CD8-positive, alpha-beta T cell (primary cell): ENCODE measurements at regions of chr17 and their contacts with region 1.

Region 1: DNA sequence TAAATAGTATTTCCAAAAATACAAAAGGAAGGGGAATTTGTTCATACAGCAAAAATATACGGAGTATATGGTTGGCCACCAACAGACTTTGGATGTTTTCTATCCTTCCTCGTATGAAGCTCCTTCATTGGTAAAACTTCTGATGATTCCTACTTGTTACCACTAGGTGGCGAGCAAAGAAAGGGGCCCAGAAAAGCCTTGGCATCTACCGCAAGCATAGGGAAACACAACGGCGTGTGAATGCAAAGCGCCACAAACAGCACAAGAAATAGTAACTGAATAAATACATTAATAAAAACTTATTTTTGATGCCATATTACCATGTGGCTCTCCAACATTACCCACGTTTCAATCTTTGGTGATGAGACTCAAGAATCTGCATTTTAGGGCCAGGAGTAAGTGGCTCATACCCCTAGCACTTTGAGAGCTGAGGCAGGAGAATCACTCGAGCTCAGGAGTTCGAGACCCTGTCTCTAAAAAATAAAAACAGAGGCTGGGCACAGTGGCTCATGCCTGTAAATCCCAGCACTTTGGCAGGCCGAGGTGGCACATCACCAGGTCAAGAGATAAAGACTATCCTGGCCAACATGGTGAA is 34.5 kb downstream of the YWHAE start:
- DNase-seq: peak; percentile 10 to 88 (median 58)
- ATAC-seq: peak; percentile 76
- H3K4me3 ChIP-seq: no peak overlapping the region
- H3K4me3 Mint-ChIP-seq: no peak overlapping the region
- H3K27ac ChIP-seq: peak overlapping the region in 1 of 2 experiments; percentile 61
- H3K27ac Mint-ChIP-seq: no peak overlapping the region
- H3K4me1 ChIP-seq: peaks cover 34% of the 10 kb centered on the region
- H3K4me1 Mint-ChIP-seq: peaks cover 62% of the 10 kb centered on the region
- H3K27me3 ChIP-seq: no peaks in the 10 kb centered on the region
- H3K27me3 Mint-ChIP-seq: no peaks in the 10 kb centered on the region
- CTCF ChIP-seq: peak; percentile 90

Region 2: DNA sequence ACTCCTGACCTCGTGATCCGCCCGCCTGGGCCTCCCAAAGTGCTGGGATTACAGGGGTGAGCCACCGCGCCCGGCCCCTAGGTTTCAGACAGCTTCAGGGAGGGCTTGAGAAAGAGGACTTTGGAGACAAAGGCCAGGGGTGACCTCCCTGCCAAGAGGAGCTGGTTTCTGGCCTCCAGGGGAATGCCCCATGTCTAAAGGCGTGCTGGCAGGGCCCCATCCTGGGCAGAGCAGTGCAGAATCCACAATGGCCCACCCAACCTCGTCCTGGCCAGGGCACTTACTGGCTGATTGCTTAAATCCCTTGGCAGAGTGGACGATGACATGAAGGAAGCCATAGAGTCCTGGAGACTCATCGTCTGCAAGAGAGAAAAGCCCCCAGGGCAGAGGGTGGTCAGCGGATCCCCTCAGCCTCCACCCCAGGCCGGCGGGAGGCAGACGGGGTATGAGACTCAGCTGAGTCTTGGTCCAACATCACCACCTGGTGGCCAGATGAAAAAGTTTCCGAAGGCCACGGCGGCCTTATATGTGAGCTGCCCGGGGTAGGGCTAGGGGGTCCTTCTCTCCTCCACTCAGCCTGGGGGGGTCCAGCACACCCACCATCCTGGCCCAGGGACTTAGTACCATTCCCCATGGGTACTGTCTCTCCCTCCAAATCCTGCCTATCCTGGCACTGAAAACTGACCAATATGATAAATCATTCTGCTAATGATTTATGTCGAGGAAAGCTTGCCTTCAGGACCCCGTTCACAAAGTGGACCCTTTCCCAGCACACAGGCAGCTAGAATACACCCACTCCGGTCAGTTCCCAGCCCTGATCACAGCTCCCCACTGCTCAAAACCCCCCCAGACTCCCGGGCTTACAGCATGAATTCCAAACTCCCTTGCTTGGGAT is 309.5 kb before region 1 on chr17:
- CTCF ChIA-PET with region 1: no interaction called
- POLR2A ChIA-PET with region 1: no interaction called
- intact Hi-C with region 1: no loop called
- DNase-seq: peak in 8 of 9 experiments; percentile 8 to 64 (median 45)
- ATAC-seq: peak; percentile 42
- H3K4me3 ChIP-seq: no peak overlapping the region
- H3K4me3 Mint-ChIP-seq: no peak overlapping the region
- H3K27ac ChIP-seq: no peak overlapping the region
- H3K27ac Mint-ChIP-seq: no peak overlapping the region
- H3K4me1 ChIP-seq: no peaks in the 10 kb centered on the region
- H3K4me1 Mint-ChIP-seq: no peaks in the 10 kb centered on the region
- H3K27me3 ChIP-seq: no peaks in the 10 kb centered on the region
- H3K27me3 Mint-ChIP-seq: no peaks in the 10 kb centered on the region
- CTCF ChIP-seq: peak; percentile 47

Region 3: GRCh38 chr17:1260086-1260769 is 105.3 kb before region 1 on chr17:
- CTCF ChIA-PET with region 1: interaction called, 10 read pairs
- POLR2A ChIA-PET with region 1: no interaction called
- intact Hi-C with region 1: no loop called
- DNase-seq: no peak
- ATAC-seq: no peak
- H3K4me3 ChIP-seq: peak overlapping the region in 1 of 2 experiments; percentile 49
- H3K4me3 Mint-ChIP-seq: peak overlapping the region; percentile 49
- H3K27ac ChIP-seq: no peak overlapping the region
- H3K27ac Mint-ChIP-seq: no peak overlapping the region
- H3K4me1 ChIP-seq: peaks cover 24% of the 10 kb centered on the region
- H3K4me1 Mint-ChIP-seq: peaks cover 31% of the 10 kb centered on the region
- H3K27me3 ChIP-seq: peaks cover 0 to 6% of the 10 kb centered on the region in 2 experiments
- H3K27me3 Mint-ChIP-seq: peaks cover 18% of the 10 kb centered on the region
- CTCF ChIP-seq: no peak

Region 4: DNA sequence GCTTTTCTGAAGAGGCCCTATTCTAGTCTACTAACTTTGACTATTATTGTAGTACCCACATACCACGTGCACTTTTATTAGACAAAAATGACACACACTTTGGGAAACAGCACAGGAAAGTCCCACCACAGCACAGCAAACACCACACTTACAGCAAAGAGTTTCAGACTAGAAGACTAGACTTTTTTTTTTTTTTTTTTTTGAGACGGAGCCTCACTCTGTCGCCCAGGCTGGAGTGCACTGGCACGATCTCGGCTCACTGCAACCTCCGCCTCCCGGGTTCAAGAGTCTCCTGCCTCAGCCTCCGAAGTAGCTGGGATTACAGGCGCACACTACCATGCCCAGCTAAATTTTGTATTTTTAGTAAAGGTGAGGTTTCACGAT is 14.4 kb after region 1 on chr17:
- CTCF ChIA-PET with region 1: interaction called, 25 read pairs
- POLR2A ChIA-PET with region 1: interaction called, 7 read pairs
- intact Hi-C with region 1: no loop called
- DNase-seq: peak in 3 of 9 experiments; percentile 45 to 72 (median 58)
- ATAC-seq: peak; percentile 56
- H3K4me3 ChIP-seq: no peak overlapping the region
- H3K4me3 Mint-ChIP-seq: peak overlapping the region; percentile 35
- H3K27ac ChIP-seq: no peak overlapping the region
- H3K27ac Mint-ChIP-seq: peak overlapping the region; percentile 64
- H3K4me1 ChIP-seq: peaks cover 66% of the 10 kb centered on the region
- H3K4me1 Mint-ChIP-seq: peaks cover 69% of the 10 kb centered on the region
- H3K27me3 ChIP-seq: no peaks in the 10 kb centered on the region
- H3K27me3 Mint-ChIP-seq: no peaks in the 10 kb centered on the region
- CTCF ChIP-seq: no peak

Region 5: DNA sequence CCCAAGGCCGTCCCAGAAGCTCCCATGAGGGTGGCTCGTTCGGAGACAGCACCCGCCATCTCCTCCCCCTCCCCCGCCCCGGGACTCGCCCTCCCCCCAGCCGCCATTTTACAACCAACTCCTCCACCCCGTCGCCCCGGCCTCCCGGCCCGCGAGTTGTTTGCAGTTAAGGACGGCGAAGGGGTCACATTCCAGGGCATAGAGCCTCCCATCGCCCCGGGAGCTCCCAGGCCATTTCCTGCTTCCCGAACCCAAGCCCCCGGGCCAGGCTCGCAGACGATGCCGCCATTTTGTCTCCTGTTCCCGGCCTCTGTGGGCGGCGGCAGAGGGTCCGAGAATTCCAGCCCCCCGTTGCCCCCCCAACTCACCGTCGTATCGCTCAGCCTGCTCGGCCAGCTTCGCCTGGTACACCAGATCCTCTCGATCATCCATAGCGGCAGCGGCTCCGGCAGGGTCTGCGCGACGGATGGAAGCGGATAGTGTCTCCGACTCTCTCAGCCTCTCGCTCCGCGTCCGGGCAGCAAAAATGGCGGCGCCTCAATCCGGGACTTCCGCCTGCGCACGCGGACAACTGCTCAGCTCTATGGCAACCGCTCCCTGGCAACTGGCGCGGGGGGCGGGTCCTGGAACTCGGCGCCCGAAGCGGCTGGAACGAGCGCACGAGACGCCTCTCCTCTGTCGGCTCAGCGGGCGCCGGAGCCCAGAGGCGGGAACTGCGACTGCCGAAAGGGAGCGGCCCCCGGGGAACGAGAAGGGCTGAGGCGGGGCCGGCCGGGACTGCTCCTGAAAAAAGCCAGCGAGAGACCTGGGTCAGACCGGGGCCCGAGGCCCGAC is 34.4 kb after region 1 on chr17 and contains the start of gene YWHAE:
- CTCF ChIA-PET with region 1: interaction called, 20 read pairs
- POLR2A ChIA-PET with region 1: interaction called, 14 read pairs
- intact Hi-C with region 1: loop called (anchors 1 kb)
- DNase-seq: peak; percentile 87 to 97 (median 96)
- ATAC-seq: peak; percentile 86
- H3K4me3 ChIP-seq: peak within 1 kb of the TSS; percentile 100
- H3K4me3 Mint-ChIP-seq: peak within 1 kb of the TSS; percentile 99
- H3K27ac ChIP-seq: peak within 1 kb of the TSS; percentile 94 to 98
- H3K27ac Mint-ChIP-seq: peak within 1 kb of the TSS; percentile 98
- H3K4me1 ChIP-seq: peaks cover 25% of the 10 kb centered on the region
- H3K4me1 Mint-ChIP-seq: peaks cover 41% of the 10 kb centered on the region
- H3K27me3 ChIP-seq: no peaks in the 10 kb centered on the region
- H3K27me3 Mint-ChIP-seq: no peaks in the 10 kb centered on the region
- CTCF ChIP-seq: no peak
- total RNA-seq, gene YWHAE: 125 to 134 TPM

Region 6: GRCh38 chr17:1473170-1473569 is 107.6 kb after region 1 on chr17:
- CTCF ChIA-PET with region 1: interaction called, 8 read pairs
- POLR2A ChIA-PET with region 1: no interaction called
- intact Hi-C with region 1: loop called in 1 of 2 experiments (anchors 1 kb)
- DNase-seq: peak in 4 of 9 experiments; percentile 31 to 52 (median 34)
- ATAC-seq: peak; percentile 39
- H3K4me3 ChIP-seq: no peak overlapping the region
- H3K4me3 Mint-ChIP-seq: no peak overlapping the region
- H3K27ac ChIP-seq: no peak overlapping the region
- H3K27ac Mint-ChIP-seq: peak overlapping the region; percentile 41
- H3K4me1 ChIP-seq: peaks cover 11% of the 10 kb centered on the region
- H3K4me1 Mint-ChIP-seq: peaks cover 16% of the 10 kb centered on the region
- H3K27me3 ChIP-seq: peaks cover 0 to 4% of the 10 kb centered on the region in 2 experiments
- H3K27me3 Mint-ChIP-seq: no peaks in the 10 kb centered on the region
- CTCF ChIP-seq: no peak

Region 7: DNA sequence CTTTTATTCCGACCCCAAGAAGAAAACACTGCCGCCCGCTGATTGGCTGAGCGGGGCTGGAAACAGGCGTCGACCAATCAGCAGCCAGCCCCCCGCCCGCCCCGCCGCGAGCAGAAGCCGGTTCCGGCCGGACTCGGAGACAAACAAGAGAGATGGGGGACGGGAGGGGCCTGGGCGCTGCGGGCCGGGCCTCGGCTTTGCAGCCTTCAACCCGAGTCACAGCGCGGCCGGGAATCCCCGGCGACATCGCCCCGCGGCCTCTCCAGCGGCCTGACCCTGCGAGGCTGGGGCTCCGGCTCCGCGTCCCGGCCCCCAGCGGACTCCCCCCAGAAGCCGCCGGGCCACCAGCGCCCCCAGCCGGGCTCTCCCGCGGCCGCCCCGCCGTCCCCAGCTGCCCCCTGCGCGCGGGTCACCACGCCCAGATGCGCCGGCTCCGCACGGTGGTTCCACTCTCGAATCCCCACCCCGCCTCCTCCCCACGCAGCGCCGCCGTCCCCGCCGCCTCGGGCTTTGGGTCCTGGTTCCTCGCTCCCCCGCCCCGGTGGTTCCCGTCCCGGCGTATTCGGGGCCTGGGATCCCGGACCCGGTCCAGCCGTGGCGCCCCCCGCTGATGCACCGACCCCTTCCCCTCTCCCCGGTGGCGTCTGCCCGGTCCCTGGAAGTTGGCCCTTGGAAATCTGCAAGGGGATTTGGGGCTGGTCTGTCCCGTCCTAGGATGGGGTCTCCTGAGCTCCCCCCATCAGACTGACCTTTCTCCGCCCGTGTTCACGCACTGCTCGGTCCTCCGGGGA is 263.5 kb after region 1 on chr17:
- CTCF ChIA-PET with region 1: interaction called, 10 read pairs
- POLR2A ChIA-PET with region 1: interaction called, 8 read pairs
- intact Hi-C with region 1: loop called (anchors 1 kb)
- DNase-seq: peak; percentile 81 to 95 (median 91)
- ATAC-seq: peak; percentile 70
- H3K4me3 ChIP-seq: peak overlapping the region; percentile 70 to 90
- H3K4me3 Mint-ChIP-seq: peak overlapping the region; percentile 95
- H3K27ac ChIP-seq: peak overlapping the region; percentile 43 to 79
- H3K27ac Mint-ChIP-seq: peak overlapping the region; percentile 90
- H3K4me1 ChIP-seq: peaks cover 20% of the 10 kb centered on the region
- H3K4me1 Mint-ChIP-seq: peaks cover 19% of the 10 kb centered on the region
- H3K27me3 ChIP-seq: no peaks in the 10 kb centered on the region
- H3K27me3 Mint-ChIP-seq: no peaks in the 10 kb centered on the region
- CTCF ChIP-seq: no peak